ENCODE measurements at regions of chr18 and their contacts with region 1.

Region 1: GRCh38 chr18:56200381-56200911 is 437.9 kb downstream of the TXNL1 start:
- DNase-seq: no peak
- ATAC-seq: peak in 2 of 4 donors; percentile 36 to 56
- H3K4me3 ChIP-seq: no peak overlapping the region
- H3K27ac ChIP-seq: peak overlapping the region; percentile 8 to 80 (median 58)
- H3K4me1 ChIP-seq: peaks cover 0 to 55% (median 26%) of the 10 kb centered on the region in 12 donors
- H3K27me3 ChIP-seq: no peaks in the 10 kb centered on the region
- CTCF ChIP-seq: no peak
- POLR2A ChIP-seq: no peak

Region 2: GRCh38 chr18:55934821-55935220 is 265.6 kb before region 1 on chr18:
- intact Hi-C with region 1: no loop called
- DNase-seq: no peak
- ATAC-seq: no peak
- H3K4me3 ChIP-seq: no peak overlapping the region
- H3K27ac ChIP-seq: no peak overlapping the region
- H3K4me1 ChIP-seq: no peaks in the 10 kb centered on the region
- H3K27me3 ChIP-seq: no peaks in the 10 kb centered on the region
- CTCF ChIP-seq: no peak
- POLR2A ChIP-seq: no peak

Region 3: DNA sequence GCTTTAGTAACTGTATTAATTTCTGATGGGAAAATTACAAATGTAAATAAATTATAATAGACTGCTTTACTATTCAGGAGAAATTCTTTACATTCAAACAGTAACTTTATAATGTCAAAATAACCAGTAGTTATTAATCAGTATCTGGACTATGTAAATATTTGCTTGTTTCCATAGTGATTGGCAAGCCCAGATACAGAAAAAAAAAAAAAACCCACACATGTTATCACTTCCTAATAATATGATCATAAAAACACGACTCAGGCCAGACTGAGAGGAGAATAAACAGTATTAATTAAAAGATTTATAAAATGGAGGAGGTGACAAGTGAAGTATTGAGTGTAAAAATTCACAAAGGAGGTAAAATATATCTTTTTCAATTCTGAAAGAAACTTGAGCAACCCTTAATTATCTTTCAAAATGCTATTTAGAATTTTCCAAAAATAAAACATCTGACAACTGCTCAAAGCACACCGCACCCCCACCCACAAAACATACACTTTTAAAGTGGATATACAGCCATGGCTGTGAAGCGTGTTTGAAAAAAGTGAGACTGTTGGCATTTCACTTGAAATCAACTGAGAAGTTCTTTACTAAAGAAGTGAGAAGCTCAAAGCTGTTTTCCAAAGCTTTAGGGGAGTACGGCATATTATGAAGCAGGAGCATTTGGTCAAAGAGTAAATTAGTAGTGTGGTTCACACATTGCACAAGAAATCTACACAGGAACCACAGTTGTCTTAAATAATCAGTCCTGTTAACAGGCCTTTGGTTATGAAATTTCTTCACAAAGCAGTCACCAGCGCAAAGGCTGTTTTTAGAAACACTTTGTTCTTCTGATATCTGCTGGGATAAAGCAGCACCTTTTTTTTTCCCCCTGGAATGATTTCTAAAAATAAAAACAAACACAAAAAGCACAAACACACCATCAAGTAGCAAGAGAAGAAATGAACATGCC is 37.9 kb before region 1 on chr18:
- intact Hi-C with region 1: loop called in 1 of 10 experiments (anchors 5 kb)
- DNase-seq: no peak
- ATAC-seq: peak; percentile 64 to 77 (median 66)
- H3K4me3 ChIP-seq: no peak overlapping the region
- H3K27ac ChIP-seq: peak overlapping the region; percentile 6 to 64 (median 46)
- H3K4me1 ChIP-seq: peaks cover 0 to 30% (median 22%) of the 10 kb centered on the region in 12 donors
- H3K27me3 ChIP-seq: no peaks in the 10 kb centered on the region
- CTCF ChIP-seq: no peak
- POLR2A ChIP-seq: no peak

Region 4: DNA sequence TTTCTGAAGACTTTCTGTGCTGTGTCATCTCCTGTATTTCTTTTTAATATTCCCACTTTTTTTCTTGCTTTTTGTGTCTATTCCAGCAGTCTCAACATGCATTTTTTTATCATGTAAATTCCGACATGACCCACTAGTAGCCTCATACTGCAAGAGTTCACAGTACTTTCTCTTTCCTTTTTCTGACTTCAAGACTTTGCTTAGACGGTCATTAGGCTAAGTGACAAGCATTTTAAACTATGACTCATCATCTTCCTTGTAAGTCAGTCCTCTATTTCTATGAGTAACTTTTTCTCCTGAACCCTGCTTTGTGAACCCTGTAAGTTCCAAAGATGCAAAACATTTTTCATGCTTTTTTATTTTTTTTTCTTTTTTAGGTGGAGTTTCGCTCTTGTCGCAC is 56.8 kb after region 1 on chr18:
- intact Hi-C with region 1: loop called in 1 of 10 experiments (anchors 10 kb)
- DNase-seq: no peak
- ATAC-seq: peak in 2 of 4 donors; percentile 38 to 48
- H3K4me3 ChIP-seq: no peak overlapping the region
- H3K27ac ChIP-seq: peak overlapping the region in 1 of 12 donors; percentile 21
- H3K4me1 ChIP-seq: peaks cover 0 to 14% (median 0%) of the 10 kb centered on the region in 12 donors
- H3K27me3 ChIP-seq: no peaks in the 10 kb centered on the region
- CTCF ChIP-seq: no peak
- POLR2A ChIP-seq: no peak

Region 5: GRCh38 chr18:56374007-56374655 is 173.7 kb after region 1 on chr18:
- intact Hi-C with region 1: no loop called
- DNase-seq: no peak
- ATAC-seq: no peak
- H3K4me3 ChIP-seq: no peak overlapping the region
- H3K27ac ChIP-seq: no peak overlapping the region
- H3K4me1 ChIP-seq: peaks cover 0 to 6% (median 0%) of the 10 kb centered on the region in 12 donors
- H3K27me3 ChIP-seq: no peaks in the 10 kb centered on the region
- CTCF ChIP-seq: no peak
- POLR2A ChIP-seq: no peak

Region 6: GRCh38 chr18:56443166-56443907 is 242.9 kb after region 1 on chr18:
- intact Hi-C with region 1: loop called in 1 of 10 experiments (anchors 10 kb)
- DNase-seq: peak in 1 of 5 donors; percentile 32
- ATAC-seq: peak in 2 of 4 donors; percentile 34 to 50
- H3K4me3 ChIP-seq: no peak overlapping the region
- H3K27ac ChIP-seq: peak overlapping the region in 5 of 12 donors; percentile 5 to 64 (median 25)
- H3K4me1 ChIP-seq: peaks cover 0 to 23% (median 7%) of the 10 kb centered on the region in 12 donors
- H3K27me3 ChIP-seq: no peaks in the 10 kb centered on the region
- CTCF ChIP-seq: no peak
- POLR2A ChIP-seq: no peak